AG04450 (cell line): ENCODE measurements at regions of chr17 and their contacts with region 1.

Region 1: DNA sequence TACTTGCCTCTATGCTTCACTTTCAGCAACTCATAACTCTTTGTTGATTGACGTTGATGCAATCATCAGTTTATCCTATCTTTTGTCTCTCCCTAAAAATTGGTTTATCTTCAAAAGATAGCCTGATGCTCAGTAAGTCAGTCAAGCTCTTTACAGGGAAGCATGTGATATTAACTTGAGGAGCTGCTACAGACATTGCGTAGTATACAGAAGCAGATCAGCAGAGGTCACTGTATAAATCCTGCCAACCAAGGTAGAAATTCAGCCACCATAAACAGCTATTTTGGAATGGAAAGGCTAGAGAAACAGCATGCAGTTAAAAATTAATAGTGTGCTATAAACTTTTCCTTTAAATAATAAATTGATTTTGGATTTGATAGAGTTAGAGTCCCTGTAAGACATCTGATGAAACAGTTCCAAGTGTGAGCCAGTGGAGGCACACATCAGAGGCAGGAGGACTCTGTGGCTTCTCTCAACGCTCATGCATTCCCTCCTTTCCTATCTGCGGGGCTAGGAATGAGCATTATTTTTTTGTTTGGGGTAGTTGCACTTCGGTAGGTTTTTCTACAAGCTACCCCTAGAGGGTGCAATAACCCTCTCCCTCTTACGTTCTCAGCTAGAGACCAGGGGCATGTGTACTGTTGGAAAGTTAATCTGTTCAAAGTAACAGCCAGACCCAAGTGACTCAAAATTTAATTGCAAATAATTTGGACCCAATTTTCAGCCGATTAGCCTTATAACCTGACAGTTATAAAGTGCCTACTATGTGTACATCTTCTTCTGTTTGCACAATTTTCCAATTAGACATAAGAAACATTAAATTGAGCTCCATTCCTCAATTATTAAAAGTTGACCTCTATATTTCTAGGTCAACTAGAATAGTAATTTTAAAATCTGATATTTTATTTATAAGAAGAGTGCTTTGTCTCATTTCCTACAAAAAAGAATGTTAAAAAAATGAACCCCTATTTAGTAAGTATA is 647.7 kb upstream of the SOX9 start:
- DNase-seq: peak; percentile 42
- H3K4me3 ChIP-seq: no peak overlapping the region
- H3K27ac ChIP-seq: no peak overlapping the region
- H3K27me3 ChIP-seq: no peaks in the 10 kb centered on the region
- CTCF ChIP-seq: peak; percentile 83

Region 2: DNA sequence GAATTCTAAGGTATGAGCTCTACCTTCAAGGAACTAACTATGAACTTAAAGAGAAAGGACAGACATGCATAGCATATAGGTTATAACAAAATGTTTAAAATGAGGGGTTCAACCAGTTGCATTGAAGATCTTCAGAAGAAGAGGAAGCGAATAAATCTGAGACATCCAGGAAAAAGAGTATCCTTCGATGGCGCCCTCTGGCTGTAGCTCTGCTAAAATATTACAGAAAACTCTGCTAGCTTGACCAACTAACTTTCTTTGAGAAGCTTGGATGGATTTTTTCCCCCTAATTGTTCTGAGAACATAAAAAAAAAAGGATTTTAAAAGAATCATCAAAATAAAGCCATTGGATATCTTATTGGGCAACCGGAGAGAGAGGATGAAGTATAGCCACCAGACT is 12.2 kb before region 1 on chr17:
- CTCF ChIA-PET with region 1: interaction called, 26 read pairs
- POLR2A ChIA-PET with region 1: no interaction called
- DNase-seq: no peak
- H3K4me3 ChIP-seq: no peak overlapping the region
- H3K27ac ChIP-seq: no peak overlapping the region
- H3K27me3 ChIP-seq: no peaks in the 10 kb centered on the region
- CTCF ChIP-seq: peak; percentile 51

Region 3: GRCh38 chr17:71511266-71511995 is 38.3 kb after region 1 on chr17:
- CTCF ChIA-PET with region 1: interaction called, 12 read pairs
- POLR2A ChIA-PET with region 1: no interaction called
- DNase-seq: no peak
- H3K4me3 ChIP-seq: no peak overlapping the region
- H3K27ac ChIP-seq: no peak overlapping the region
- H3K27me3 ChIP-seq: no peaks in the 10 kb centered on the region
- CTCF ChIP-seq: no peak

Region 4: DNA sequence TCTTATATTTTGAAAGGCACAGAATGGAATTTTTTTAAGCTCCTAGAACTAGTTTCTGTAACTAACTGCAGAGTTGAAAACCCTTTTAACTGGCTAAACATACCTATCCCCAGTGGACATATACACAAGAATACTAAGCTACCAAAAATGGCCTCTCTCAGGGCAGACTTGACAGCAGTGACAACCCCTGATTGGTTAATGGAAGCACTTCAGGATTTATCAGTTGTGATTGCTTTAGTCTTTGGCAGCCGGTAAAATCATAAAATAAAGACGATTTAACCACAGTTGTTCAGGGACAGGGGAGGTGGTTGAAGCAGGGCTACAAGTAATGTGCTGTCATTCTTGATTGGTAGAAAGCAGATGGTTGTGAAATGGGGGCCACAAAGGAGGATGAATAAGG is 195.7 kb after region 1 on chr17:
- CTCF ChIA-PET with region 1: no interaction called
- POLR2A ChIA-PET with region 1: no interaction called
- DNase-seq: no peak
- H3K4me3 ChIP-seq: no peak overlapping the region
- H3K27ac ChIP-seq: no peak overlapping the region
- H3K27me3 ChIP-seq: no peaks in the 10 kb centered on the region
- CTCF ChIP-seq: no peak